ENCODE measurements at regions of chr1 and their contacts with region 1.

Region 1: GRCh38 chr1:93846211-93846991 is 32.6 kb downstream of the DNTTIP2 start:
- DNase-seq: peak; percentile 74
- H3K4me3 ChIP-seq: peak overlapping the region; percentile 74 to 97 (median 87)
- H3K27ac ChIP-seq: peak overlapping the region; percentile 83
- H3K4me1 ChIP-seq: peaks cover 39% of the 10 kb centered on the region
- H3K27me3 ChIP-seq: no peaks in the 10 kb centered on the region
- CTCF ChIP-seq: peak in 1 of 2 donors; percentile 42

Region 2: DNA sequence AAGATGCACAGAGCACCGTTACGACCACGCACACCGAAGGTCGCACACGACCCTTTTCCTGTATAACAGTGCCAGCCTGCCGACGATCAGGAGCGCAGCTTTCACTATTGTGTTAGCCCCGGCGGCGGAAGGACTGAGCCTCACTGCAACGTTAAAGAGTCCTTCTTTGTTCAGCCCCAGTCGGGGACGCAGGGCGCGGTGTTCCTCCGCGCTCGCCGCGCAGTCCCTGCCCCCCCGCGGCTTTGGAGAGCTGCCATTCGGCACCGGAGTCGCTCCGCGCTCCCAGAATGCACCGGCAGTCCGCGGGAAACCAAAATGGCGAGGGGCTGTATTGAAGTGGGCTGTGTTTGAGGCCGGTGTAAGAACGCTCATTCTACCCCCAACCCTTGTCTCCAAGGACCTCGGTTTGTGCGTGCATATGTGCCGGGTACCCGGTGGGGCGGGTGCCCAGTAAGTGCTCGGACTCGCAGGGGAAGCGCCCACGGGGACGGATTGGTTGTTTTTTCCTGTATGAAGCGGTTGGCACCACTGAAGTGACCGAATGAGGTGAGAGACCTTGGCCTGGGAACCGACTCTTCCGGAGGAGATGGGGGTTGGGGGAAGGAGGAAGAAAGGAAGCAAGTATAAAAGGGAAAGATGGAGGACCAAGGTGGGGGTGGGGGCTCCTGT is 767.3 kb before region 1 on chr1 and contains the start of gene MTF2:
- CTCF ChIA-PET with region 1: no interaction called
- dilution Hi-C with region 1: no loop called
- in situ Hi-C with region 1: no loop called
- intact Hi-C with region 1: loop called (anchors 2 kb)
- DNase-seq: peak; percentile 94
- H3K4me3 ChIP-seq: peak within 1 kb of the TSS; percentile 67 to 99 (median 83)
- H3K27ac ChIP-seq: peak within 1 kb of the TSS; percentile 79
- H3K4me1 ChIP-seq: peaks cover 22% of the 10 kb centered on the region
- H3K27me3 ChIP-seq: no peaks in the 10 kb centered on the region
- CTCF ChIP-seq: no peak
- total RNA-seq, gene MTF2: 23.5 to 27.5 TPM

Region 3: GRCh38 chr1:93304716-93305138 is 541.7 kb before region 1 on chr1:
- CTCF ChIA-PET with region 1: no interaction called
- dilution Hi-C with region 1: no loop called
- in situ Hi-C with region 1: loop called in 1 of 2 experiments (anchors 10 kb)
- intact Hi-C with region 1: loop called (anchors 1 kb)
- DNase-seq: peak; percentile 49
- H3K4me3 ChIP-seq: no peak overlapping the region
- H3K27ac ChIP-seq: no peak overlapping the region
- H3K4me1 ChIP-seq: no peaks in the 10 kb centered on the region
- H3K27me3 ChIP-seq: no peaks in the 10 kb centered on the region
- CTCF ChIP-seq: peak; percentile 83 to 93

Region 4: DNA sequence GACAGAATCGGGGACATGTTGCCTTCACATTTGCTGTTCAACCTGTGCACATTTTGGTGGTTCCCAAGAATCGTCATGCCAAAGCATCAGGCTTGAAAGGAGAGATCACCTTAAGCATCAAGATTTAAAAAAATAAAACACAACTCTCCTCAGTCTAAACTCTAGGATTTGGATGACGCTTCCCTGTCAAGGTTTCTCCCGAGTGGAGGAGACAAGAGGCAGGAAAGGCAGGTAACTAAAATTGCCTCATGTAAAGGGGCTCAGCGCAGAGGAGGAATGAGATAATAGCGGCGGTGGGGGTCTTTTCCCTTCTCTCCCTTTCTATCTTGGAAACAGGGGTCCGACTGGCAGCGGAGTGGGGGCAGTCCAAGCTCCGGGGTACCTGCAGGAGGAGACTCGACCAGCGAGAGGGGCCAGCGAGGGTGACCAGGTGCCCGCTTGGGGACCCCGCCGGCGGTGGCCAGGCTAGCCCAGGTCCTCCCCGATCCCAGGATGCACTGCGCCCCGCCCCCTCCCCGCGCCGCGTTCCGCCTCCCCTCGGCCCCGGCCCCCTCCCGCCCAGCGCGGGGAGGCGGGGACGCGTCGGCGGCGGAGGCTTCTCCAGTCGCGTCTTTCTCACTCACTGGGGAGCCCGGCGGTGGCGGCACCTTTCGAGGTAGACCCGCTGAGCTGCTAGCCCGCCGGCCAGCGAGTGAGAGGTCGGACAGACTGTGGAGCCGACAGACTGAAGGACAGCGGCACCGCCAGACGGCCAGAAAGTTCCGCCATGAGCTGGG is 398.7 kb before region 1 on chr1 and contains the start of gene FNBP1L:
- CTCF ChIA-PET with region 1: interaction called, 7 read pairs
- dilution Hi-C with region 1: no loop called
- in situ Hi-C with region 1: loop called in 1 of 2 experiments (anchors 10 kb)
- intact Hi-C with region 1: loop called (anchors 1 kb)
- DNase-seq: peak; percentile 73
- H3K4me3 ChIP-seq: peak within 1 kb of the TSS; percentile 71 to 89 (median 75)
- H3K27ac ChIP-seq: peak within 1 kb of the TSS; percentile 51
- H3K4me1 ChIP-seq: peaks cover 11% of the 10 kb centered on the region
- H3K27me3 ChIP-seq: no peaks in the 10 kb centered on the region
- CTCF ChIP-seq: no peak
- total RNA-seq, gene FNBP1L: 22.1 to 39.2 TPM

Region 5: DNA sequence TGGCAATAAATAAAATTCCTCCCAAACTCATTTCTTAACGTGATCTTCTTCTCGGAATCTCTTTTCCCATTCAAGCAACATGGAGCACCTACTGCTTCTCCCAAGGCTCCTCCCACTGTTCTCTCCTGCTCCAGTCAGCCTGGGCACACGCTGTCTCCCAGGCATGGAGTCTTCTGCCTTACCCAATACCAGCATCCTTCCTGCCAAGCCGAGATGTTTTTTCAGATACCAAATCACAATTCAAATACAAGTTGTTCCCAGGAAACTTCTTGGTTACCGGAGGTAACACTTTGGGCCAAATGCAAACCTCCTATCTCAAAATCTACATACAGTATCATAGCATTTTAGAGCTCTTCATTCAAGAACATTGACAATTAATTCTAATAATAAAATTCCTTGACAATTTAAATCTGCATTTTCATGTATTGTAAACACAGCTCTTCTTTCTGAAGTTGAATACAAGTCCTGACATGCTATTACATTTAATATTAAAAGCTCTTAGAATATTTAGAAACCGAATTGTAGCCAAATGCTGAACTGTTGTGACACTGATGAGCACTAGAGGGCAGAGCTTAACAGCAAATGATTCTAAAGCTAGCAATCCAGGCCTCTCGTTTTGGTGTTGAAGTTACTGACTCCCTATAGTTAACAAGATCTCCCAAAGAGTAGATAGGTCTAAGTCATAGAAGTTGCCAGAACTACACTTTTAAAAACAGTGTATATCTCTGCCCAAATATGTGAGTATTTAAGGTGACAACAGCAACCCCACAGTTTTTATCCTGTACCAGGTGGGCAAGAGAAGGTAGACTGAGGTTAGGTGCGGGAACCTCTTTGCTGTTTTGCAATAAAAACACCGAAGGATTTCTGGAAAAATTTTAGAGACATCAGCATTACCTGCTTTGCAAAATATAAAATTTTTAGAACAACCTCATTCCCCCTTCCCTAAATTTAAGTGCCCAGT is 217.0 kb before region 1 on chr1:
- CTCF ChIA-PET with region 1: interaction called, 6 read pairs
- dilution Hi-C with region 1: no loop called
- in situ Hi-C with region 1: no loop called
- intact Hi-C with region 1: loop called (anchors 1 kb)
- DNase-seq: peak; percentile 59
- H3K4me3 ChIP-seq: no peak overlapping the region
- H3K27ac ChIP-seq: peak overlapping the region; percentile 35
- H3K4me1 ChIP-seq: peaks cover 65% of the 10 kb centered on the region
- H3K27me3 ChIP-seq: no peaks in the 10 kb centered on the region
- CTCF ChIP-seq: peak; percentile 74 to 78

Region 6: DNA sequence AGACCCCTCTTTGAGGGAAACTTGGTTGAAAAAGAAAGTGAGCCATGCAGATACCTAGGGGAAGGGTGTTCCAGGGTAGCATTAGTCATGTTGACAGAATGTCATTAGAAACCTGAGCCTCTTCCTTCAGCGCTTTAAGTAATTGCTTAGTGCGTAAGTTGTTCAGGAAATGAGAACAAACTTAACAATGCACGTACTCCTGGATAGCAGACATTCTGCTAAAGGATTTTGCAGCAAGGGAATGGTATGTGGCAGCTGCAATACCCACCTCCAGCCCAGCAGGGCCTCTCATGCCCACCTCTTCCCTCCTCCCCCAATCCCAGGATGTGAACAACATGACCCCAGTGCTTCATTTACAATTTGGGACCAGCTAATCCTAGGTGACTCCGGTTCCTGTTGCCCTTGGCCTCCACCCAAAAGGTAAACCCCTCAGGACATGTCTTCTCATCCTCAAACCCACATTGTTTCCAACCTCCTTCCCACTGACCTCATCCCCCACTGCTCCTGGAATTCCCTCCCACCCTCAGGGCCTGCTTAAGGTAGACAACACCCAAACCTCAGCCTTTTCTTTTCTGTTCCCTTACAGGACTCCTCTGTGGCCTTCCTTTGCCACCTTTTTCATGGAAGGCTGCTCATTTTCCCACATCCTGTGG is 66.7 kb before region 1 on chr1:
- CTCF ChIA-PET with region 1: no interaction called
- dilution Hi-C with region 1: no loop called
- in situ Hi-C with region 1: no loop called
- intact Hi-C with region 1: loop called (anchors 2 kb)
- DNase-seq: peak; percentile 100
- H3K4me3 ChIP-seq: no peak overlapping the region
- H3K27ac ChIP-seq: peak overlapping the region; percentile 99
- H3K4me1 ChIP-seq: peaks cover 58% of the 10 kb centered on the region
- H3K27me3 ChIP-seq: no peaks in the 10 kb centered on the region
- CTCF ChIP-seq: peak in 1 of 2 donors; percentile 22

Region 7: DNA sequence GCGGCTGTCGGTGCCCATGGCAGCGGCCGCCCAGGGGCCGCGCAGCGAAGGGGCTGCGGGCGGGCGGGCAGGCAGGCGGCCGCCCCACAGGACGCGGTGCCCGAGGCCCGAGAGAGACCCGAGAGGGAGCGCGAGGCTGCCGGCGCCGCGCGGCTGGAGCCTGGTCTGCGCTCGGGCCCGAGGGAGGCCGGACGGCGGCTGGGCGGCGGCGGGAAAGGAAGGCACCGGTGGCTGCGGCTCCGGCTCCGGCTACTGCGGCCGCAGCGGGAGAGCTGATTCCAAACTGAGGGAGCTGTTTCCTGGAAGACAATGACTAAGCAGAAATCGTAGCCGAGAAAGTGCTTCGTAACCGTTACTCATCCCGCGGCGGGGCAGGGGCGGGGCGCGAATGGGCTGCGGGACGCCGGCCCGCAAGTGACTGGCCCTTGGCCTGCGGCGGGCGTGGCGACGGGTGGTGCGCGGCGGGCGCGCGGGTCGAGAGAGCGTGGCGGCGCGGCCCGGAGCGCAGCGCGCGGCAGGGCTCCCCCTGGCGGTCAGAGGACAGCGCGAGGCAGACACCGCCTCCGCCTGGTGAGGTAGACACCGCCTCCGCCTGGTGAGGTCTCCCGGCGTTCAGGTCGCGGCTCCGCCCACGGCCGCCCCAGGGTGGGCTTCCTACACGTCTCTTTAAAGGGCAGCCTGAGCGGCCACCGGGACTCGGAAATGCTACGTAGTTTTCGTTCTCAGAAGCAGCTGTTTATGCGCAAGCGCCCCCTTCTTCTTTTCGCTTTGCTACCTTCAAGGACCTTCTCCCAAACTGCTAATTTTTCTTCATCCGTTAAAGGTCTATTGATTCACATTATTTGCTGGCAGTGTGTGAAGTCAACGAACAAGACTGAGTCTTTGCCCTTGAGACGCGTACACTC is 63.0 kb after region 1 on chr1 and contains the start of gene GCLM:
- CTCF ChIA-PET with region 1: no interaction called
- dilution Hi-C with region 1: no loop called
- in situ Hi-C with region 1: no loop called
- intact Hi-C with region 1: loop called (anchors 1 kb)
- DNase-seq: peak; percentile 94
- H3K4me3 ChIP-seq: peak within 1 kb of the TSS; percentile 50 to 90 (median 78)
- H3K27ac ChIP-seq: peak within 1 kb of the TSS; percentile 88
- H3K4me1 ChIP-seq: peaks cover 16% of the 10 kb centered on the region
- H3K27me3 ChIP-seq: no peaks in the 10 kb centered on the region
- CTCF ChIP-seq: peak; percentile 68 to 70
- total RNA-seq, gene GCLM: 96.5 to 129 TPM